Motor neuron (in vitro differentiated cells): ENCODE measurements at regions of chr6 and their contacts with region 1.

Region 1: GRCh38 chr6:127690092-127690491 is 113.1 kb downstream of the C6orf58 start:
- ATAC-seq: peak in 2 of 8 experiments; percentile 33 to 38
- H3K4me3 ChIP-seq: no peak overlapping the region
- H3K27ac ChIP-seq: no peak overlapping the region
- H3K4me1 ChIP-seq: no peaks in the 10 kb centered on the region

Region 2: DNA sequence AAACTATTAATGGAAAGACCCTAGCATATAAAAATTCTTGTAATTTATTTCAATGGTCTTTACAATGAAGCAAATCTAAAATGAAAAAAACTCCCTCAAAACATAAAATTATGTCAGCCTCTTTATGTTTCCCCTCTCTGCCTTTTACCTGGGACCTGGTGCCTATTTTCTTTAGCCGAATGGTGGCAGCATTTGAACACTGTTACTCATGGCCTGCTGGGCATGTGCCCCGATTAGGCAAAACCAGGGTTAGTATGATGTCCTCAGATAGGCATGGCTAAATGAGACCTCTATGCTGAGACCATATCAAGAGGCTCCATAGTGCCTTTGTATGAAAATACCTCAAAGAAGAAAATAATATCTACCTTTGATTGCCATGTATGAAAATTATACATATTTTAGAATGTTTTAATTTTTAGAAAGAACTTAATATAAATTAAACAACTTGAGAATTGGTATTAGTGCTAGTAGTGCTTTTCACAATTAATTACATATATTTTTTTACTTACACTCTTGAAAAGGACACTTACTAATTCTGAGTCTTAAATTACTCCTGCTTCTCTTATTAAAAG is 135.6 kb before region 1 on chr6:
- in situ Hi-C with region 1: loop called in 1 of 9 experiments (anchors 25 kb)
- ATAC-seq: peak in 5 of 8 experiments; percentile 53 to 78 (median 72)
- H3K4me3 ChIP-seq: no peak overlapping the region
- H3K27ac ChIP-seq: no peak overlapping the region
- H3K4me1 ChIP-seq: no peaks in the 10 kb centered on the region

Region 3: GRCh38 chr6:128046033-128046432 is 355.9 kb after region 1 on chr6:
- in situ Hi-C with region 1: no loop called
- ATAC-seq: no peak
- H3K4me3 ChIP-seq: no peak overlapping the region
- H3K27ac ChIP-seq: no peak overlapping the region
- H3K4me1 ChIP-seq: no peaks in the 10 kb centered on the region